Endothelial cell of umbilical vein (primary cell): ENCODE measurements at regions of chr17 and their contacts with region 1.

Region 1: GRCh38 chr17:5486204-5487124 is at the start of gene MIS12:
- DNase-seq: peak; percentile 100
- H3K4me3 ChIP-seq: peak within 1 kb of the TSS; percentile 95 to 98 (median 96)
- H3K27ac ChIP-seq: peak within 1 kb of the TSS; percentile 95
- H3K4me1 ChIP-seq: peaks cover 20% of the 10 kb centered on the region
- H3K27me3 ChIP-seq: no peaks in the 10 kb centered on the region
- CTCF ChIP-seq: no peak
- POLR2A ChIP-seq: peak; percentile 79
- total RNA-seq, gene MIS12: 18.6 and 20.1 TPM in 2 replicates

Region 2: DNA sequence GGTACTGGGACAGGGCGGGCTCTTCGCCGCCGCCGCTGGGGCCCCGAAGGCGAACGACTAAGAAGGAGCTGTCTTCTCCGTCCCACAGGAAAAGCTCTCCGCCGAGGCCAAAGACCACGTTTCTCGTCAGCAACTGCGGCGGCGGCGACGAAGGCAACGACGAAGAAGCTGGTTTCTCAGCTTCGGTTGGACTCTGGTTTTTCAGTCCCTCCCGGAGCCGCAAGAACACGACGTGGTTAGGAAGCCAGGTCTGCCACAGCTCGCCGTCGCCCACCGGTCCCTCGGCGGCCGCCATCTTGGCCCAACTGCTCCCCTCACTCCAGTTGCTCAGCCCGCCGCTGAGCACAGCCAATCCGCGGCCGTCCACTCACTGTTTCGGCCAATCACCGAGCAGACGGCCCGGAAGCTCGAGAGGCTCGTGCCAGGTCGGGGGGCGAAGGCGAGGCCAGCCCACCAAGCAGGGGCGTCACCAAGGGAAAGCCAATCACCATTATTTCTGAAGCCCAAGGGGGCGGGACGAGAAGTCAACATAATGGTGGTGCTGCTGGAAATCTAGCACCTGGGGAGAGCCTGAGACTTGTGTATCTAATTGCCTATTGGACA is 67.0 kb before region 1 on chr17 and contains the start of gene NUP88:
- CTCF ChIA-PET with region 1: no interaction called
- POLR2A ChIA-PET with region 1: interaction called, 4 read pairs
- dilution Hi-C with region 1: no loop called
- intact Hi-C with region 1: loop called (anchors 1 kb)
- DNase-seq: peak; percentile 99
- H3K4me3 ChIP-seq: peak within 1 kb of the TSS; percentile 75 to 94 (median 89)
- H3K27ac ChIP-seq: peak within 1 kb of the TSS; percentile 79
- H3K4me1 ChIP-seq: peaks cover 13% of the 10 kb centered on the region
- H3K27me3 ChIP-seq: no peaks in the 10 kb centered on the region
- CTCF ChIP-seq: no peak
- POLR2A ChIP-seq: peak; percentile 49
- total RNA-seq, gene NUP88: 87.4 and 95.8 TPM in 2 replicates

Region 3: GRCh38 chr17:5468075-5468473 is 18.4 kb before region 1 on chr17:
- CTCF ChIA-PET with region 1: interaction called, 7 read pairs
- POLR2A ChIA-PET with region 1: interaction called, 13 read pairs
- dilution Hi-C with region 1: no loop called
- intact Hi-C with region 1: loop called (anchors 1 kb)
- DNase-seq: no peak
- H3K4me3 ChIP-seq: peak overlapping the region; percentile 77 to 92 (median 87)
- H3K27ac ChIP-seq: no peak overlapping the region
- H3K4me1 ChIP-seq: peaks cover 7% of the 10 kb centered on the region
- H3K27me3 ChIP-seq: no peaks in the 10 kb centered on the region
- CTCF ChIP-seq: no peak
- POLR2A ChIP-seq: no peak

Region 4: DNA sequence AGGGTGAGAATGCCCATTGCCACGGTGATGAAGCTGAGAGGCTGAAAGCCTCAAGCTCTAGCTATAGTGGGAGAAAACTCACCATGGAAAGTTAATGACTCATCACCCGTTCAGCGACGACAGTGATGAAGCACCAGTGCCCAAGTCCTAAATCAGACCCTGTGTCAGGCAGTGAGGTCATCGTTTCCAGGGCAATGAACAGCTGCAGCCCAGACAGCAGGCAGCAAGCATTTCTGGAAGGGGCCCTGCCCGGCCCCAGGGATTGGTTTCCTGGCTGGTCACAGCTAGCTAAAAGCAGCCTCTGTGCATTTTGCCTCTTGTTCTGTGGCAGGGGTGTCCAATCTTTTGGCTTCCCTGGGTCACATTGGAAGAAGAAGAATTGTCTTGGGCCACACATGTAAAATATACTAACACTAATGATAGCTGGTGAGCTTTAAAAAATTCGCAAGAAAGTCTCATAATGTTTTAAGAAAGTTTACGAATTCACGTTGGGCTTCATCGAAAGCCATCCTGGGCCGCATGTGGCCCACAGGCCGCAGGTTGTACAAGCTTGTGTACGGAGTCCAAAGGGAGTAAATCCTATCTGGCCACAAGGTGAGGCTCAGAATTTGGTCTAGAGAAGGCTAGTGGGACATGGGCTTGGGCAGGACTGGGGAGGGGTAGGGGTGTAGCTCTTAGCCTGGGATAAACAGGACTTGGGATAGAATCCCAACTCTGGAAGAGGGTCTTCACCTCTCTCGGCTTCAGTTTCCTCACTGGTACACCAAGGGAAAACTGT is 40.5 kb after region 1 on chr17:
- CTCF ChIA-PET with region 1: interaction called, 3 read pairs
- POLR2A ChIA-PET with region 1: interaction called, 9 read pairs
- dilution Hi-C with region 1: no loop called
- intact Hi-C with region 1: loop called (anchors 1 kb)
- DNase-seq: peak; percentile 97
- H3K4me3 ChIP-seq: no peak overlapping the region
- H3K27ac ChIP-seq: peak overlapping the region; percentile 96
- H3K4me1 ChIP-seq: peaks cover 18% of the 10 kb centered on the region
- H3K27me3 ChIP-seq: no peaks in the 10 kb centered on the region
- CTCF ChIP-seq: no peak
- POLR2A ChIP-seq: peak; percentile 60

Region 5: GRCh38 chr17:6443692-6444569 is 957.5 kb after region 1 on chr17 and contains the start of gene PIMREG:
- CTCF ChIA-PET with region 1: no interaction called
- POLR2A ChIA-PET with region 1: no interaction called
- dilution Hi-C with region 1: no loop called
- intact Hi-C with region 1: loop called (anchors 5 kb)
- DNase-seq: peak; percentile 92
- H3K4me3 ChIP-seq: peak within 1 kb of the TSS; percentile 51 to 85 (median 70)
- H3K27ac ChIP-seq: peak within 1 kb of the TSS; percentile 50
- H3K4me1 ChIP-seq: peaks cover 17% of the 10 kb centered on the region
- H3K27me3 ChIP-seq: peaks cover 4 to 13% of the 10 kb centered on the region in 2 experiments
- CTCF ChIP-seq: no peak
- POLR2A ChIP-seq: peak; percentile 28
- total RNA-seq, gene PIMREG: 35.3 and 37.7 TPM in 2 replicates